Heart right ventricle (tissue), 16 donors: ENCODE measurements at regions of chr1 and their contacts with region 1.

Region 1: GRCh38 chr1:204123376-204123775 is 28.5 kb downstream of the ETNK2 start:
- DNase-seq: no peak
- ATAC-seq: no peak
- H3K4me3 ChIP-seq: no peak overlapping the region
- H3K27ac ChIP-seq: no peak overlapping the region
- H3K4me1 ChIP-seq: peaks cover 0 to 28% (median 19%) of the 10 kb centered on the region in 9 donors
- H3K27me3 ChIP-seq: no peaks in the 10 kb centered on the region
- CTCF ChIP-seq: peak in 7 of 9 donors; percentile 7 to 30 (median 17)

Region 2: GRCh38 chr1:204089044-204089751 is 34.2 kb before region 1 on chr1:
- intact Hi-C with region 1: loop called in 2 of 10 experiments (anchors 5 kb)
- DNase-seq: peak in 1 of 2 donors; percentile 27
- ATAC-seq: peak in 7 of 8 donors; percentile 32 to 75 (median 44)
- H3K4me3 ChIP-seq: no peak overlapping the region
- H3K27ac ChIP-seq: peak overlapping the region in 7 of 10 donors; percentile 40 to 79 (median 58)
- H3K4me1 ChIP-seq: peaks cover 21 to 100% (median 66%) of the 10 kb centered on the region in 9 donors
- H3K27me3 ChIP-seq: no peaks in the 10 kb centered on the region
- CTCF ChIP-seq: no peak

Region 3: DNA sequence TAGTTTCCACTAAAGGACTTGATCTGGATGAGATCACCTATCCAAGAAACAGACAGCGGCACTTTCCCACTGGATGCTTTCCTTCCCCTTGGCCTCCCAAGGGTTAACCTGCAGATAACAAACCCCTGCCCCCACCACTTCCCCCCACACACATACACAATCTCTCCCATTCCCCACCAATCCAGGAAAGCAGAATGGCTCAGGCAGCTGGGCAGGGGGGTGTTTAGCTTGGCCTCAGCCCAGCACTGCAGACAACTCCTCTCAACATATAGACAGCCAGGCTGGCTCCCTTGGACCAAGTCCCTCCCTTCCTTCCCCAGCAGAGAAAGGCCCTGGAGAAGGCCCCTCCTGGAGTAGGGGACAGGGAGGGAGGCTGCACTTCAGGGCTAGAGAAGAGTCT is 211.7 kb after region 1 on chr1:
- intact Hi-C with region 1: no loop called
- DNase-seq: no peak
- ATAC-seq: no peak
- H3K4me3 ChIP-seq: no peak overlapping the region
- H3K27ac ChIP-seq: no peak overlapping the region
- H3K4me1 ChIP-seq: peaks cover 0 to 15% (median 0%) of the 10 kb centered on the region in 9 donors
- H3K27me3 ChIP-seq: no peaks in the 10 kb centered on the region
- CTCF ChIP-seq: no peak